Mucosa of descending colon (tissue), 3 donors: ENCODE measurements at regions of chr9 and their contacts with region 1.

Region 1: GRCh38 chr9:70602321-70603019 is 188.0 kb upstream of the KLF9 start:
- DNase-seq: peak in 1 of 3 donors; percentile 73
- ATAC-seq: peak; percentile 75
- H3K4me3 ChIP-seq: no peak overlapping the region
- H3K4me1 ChIP-seq: peaks cover 2% of the 10 kb centered on the region
- CTCF ChIP-seq: no peak

Region 2: GRCh38 chr9:70352802-70353201 is 249.7 kb before region 1 on chr9:
- intact Hi-C with region 1: loop called (anchors 5 kb)
- DNase-seq: no peak
- ATAC-seq: no peak
- H3K4me3 ChIP-seq: no peak overlapping the region
- H3K4me1 ChIP-seq: no peaks in the 10 kb centered on the region
- CTCF ChIP-seq: peak; percentile 39

Region 3: GRCh38 chr9:70494221-70494620 is 108.2 kb before region 1 on chr9:
- intact Hi-C with region 1: loop called in 1 of 2 experiments (anchors 10 kb)
- DNase-seq: no peak
- ATAC-seq: no peak
- H3K4me3 ChIP-seq: no peak overlapping the region
- H3K4me1 ChIP-seq: no peaks in the 10 kb centered on the region
- CTCF ChIP-seq: no peak

Region 4: GRCh38 chr9:70852711-70853240 is 250.3 kb after region 1 on chr9:
- intact Hi-C with region 1: no loop called
- DNase-seq: no peak
- ATAC-seq: no peak
- H3K4me3 ChIP-seq: no peak overlapping the region
- H3K4me1 ChIP-seq: no peaks in the 10 kb centered on the region
- CTCF ChIP-seq: no peak